ENCODE measurements at regions of chr20 and their contacts with region 1.

Region 1: DNA sequence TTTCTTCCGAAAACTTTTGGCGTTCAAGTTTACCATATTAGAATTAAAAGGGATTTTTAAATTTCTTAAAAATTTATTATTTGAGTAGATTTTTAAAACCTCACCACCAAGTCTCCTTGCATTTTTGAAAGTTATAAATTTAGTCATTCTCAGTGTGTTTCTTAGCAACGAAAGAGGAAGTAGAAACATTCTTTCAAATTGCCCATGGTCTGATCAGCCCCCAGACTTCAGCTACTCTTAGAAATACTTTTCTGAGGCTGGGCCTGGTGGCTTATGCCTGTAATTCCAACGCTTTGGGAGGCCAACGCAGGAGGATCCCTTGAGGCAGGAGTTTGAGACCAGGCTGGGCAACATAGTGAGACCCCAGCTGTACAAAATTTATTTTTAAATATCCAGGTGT is 15.1 kb upstream of the RTF2 start:
- DNase-seq: no peak
- ATAC-seq: no peak
- H3K4me3 ChIP-seq: no peak overlapping the region
- H3K27ac ChIP-seq: no peak overlapping the region
- H3K4me1 ChIP-seq: no peaks in the 10 kb centered on the region
- H3K27me3 ChIP-seq: peaks cover 0 to 5% of the 10 kb centered on the region in 2 donors
- CTCF ChIP-seq: no peak

Region 2: DNA sequence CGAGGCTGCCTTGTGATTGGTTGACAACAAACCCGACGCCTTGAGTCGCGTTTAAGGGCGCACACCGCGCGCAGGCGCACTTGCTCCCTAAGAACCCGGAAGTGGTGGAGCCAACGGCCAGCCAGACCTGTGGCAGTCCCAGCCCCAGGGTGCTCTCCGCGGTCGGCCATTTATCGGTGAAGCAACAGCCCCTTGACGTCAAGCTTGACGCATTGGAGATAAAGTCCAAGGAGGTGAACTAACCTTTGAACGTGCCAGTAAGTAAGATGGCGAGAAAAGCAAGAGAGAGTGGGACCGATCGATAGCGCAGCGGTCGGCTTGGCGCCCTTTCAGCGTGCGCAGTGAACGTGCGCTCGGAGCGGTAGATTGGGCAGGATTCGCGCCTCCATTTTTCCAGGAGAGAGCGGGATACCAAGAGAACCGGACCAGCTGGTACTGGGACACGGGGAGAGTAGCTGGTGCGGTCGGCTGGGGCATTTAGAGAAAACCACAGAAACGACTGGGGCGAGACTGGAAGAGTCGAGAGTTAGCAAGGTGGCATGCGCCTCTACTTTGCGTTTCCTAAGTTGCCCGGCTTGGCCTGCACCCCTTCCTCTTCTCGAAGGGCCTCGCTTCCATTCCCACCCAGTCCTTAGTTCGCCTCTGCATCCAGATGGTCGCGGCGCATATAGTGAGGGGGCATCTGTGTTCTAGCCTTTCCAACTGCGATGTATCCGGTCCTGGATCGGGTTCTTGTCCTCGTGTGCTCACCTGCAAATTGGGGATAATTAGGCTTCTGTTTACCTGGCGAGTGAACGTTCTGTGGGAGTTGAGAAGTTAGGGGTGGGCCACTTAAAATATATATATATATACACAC is 60.8 kb before region 1 on chr20 and contains the start of gene CSTF1:
- intact Hi-C with region 1: loop called in 1 of 2 experiments (anchors 10 kb)
- DNase-seq: peak; percentile 98 to 100 (median 99)
- ATAC-seq: peak; percentile 97
- H3K4me3 ChIP-seq: peak within 1 kb of the TSS; percentile 78 to 87
- H3K27ac ChIP-seq: peak within 1 kb of the TSS; percentile 91 to 96
- H3K4me1 ChIP-seq: peaks cover 14 to 32% of the 10 kb centered on the region in 2 donors
- H3K27me3 ChIP-seq: no peaks in the 10 kb centered on the region
- CTCF ChIP-seq: no peak
- polyA plus RNA-seq, gene CSTF1: 39.0 to 44.6 (median 42.9) TPM